Tibial artery (tissue), 4 donors: ENCODE measurements at regions of chr4 and their contacts with region 1.

Region 1: GRCh38 chr4:47704693-47705325 is 133.1 kb downstream of the CORIN start:
- DNase-seq: no peak
- H3K4me3 ChIP-seq: no peak overlapping the region
- H3K27ac ChIP-seq: no peak overlapping the region
- H3K4me1 ChIP-seq: no peaks in the 10 kb centered on the region
- H3K27me3 ChIP-seq: peaks cover 0 to 4% of the 10 kb centered on the region in 2 donors
- CTCF ChIP-seq: peak in 1 of 2 experiments; percentile 23

Region 2: DNA sequence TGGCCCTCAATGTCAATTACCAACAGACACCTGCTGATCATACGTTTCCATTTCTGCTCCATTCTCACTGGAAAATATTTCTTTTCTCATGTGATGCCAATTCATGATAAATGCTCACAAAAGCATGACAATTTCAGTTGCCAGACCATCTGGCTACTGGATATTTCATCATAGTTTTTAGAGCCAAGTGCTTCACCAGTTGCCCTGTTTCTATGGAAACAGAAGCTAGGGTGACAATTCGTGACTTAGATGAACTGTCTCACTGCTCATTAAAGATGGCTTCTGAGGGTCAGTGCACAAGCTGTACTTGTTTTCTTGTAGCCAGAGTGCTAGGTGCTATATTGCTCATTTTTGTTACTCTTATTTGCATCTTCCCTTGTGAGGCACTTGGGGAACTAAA is 426.2 kb before region 1 on chr4:
- intact Hi-C with region 1: no loop called
- DNase-seq: no peak
- H3K4me3 ChIP-seq: no peak overlapping the region
- H3K27ac ChIP-seq: no peak overlapping the region
- H3K4me1 ChIP-seq: no peaks in the 10 kb centered on the region
- H3K27me3 ChIP-seq: no peaks in the 10 kb centered on the region
- CTCF ChIP-seq: no peak

Region 3: GRCh38 chr4:47510506-47511143 is 194.2 kb before region 1 on chr4:
- intact Hi-C with region 1: no loop called
- DNase-seq: no peak
- H3K4me3 ChIP-seq: no peak overlapping the region
- H3K27ac ChIP-seq: peak overlapping the region; percentile 57 to 65
- H3K4me1 ChIP-seq: peaks cover 0 to 30% (median 15%) of the 10 kb centered on the region in 4 donors
- H3K27me3 ChIP-seq: no peaks in the 10 kb centered on the region
- CTCF ChIP-seq: peak in 1 of 2 experiments; percentile 22

Region 4: GRCh38 chr4:47836641-47837093 is 131.9 kb after region 1 on chr4:
- intact Hi-C with region 1: loop called (anchors 10 kb)
- DNase-seq: peak; percentile 70 to 81
- H3K4me3 ChIP-seq: peak overlapping the region; percentile 51 to 58
- H3K27ac ChIP-seq: peak overlapping the region in 1 of 2 donors; percentile 35
- H3K4me1 ChIP-seq: peaks cover 0 to 42% (median 20%) of the 10 kb centered on the region in 4 donors
- H3K27me3 ChIP-seq: no peaks in the 10 kb centered on the region
- CTCF ChIP-seq: peak; percentile 60 to 64